H1 (cell line): ENCODE measurements at regions of chr16 and their contacts with region 1.

Region 1: DNA sequence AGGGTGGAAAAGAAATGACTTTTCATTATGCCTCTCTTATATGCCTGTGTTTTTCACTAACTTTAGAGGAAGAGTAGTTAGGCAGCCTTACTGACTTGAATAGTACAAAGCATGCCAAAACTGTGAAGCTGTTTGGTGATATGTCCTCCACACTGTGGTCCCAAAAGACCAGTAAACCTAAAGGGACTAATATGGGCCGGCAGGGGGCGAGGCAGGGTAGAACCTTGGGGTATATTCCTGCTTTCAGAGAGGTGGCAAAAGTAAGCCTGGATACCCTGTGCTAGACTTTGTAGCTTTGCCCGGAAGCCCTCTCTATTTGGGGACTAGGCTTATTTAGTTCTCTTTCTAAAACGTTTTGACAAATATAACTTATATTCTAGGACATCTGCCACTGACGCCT is 36.5 kb upstream of the VWA3A start:
- DNase-seq: peak in 1 of 2 experiments; percentile 69
- H3K4me3 ChIP-seq: no peak overlapping the region
- H3K27ac ChIP-seq: no peak overlapping the region
- H3K4me1 ChIP-seq: no peaks in the 10 kb centered on the region
- H3K27me3 ChIP-seq: no peaks in the 10 kb centered on the region
- CTCF ChIP-seq: peak; percentile 59 to 70 (median 67)
- EP300 ChIP-seq: no peak
- POLR2A ChIP-seq: no peak
- RAD21 ChIP-seq: peak; percentile 45 to 59

Region 2: GRCh38 chr16:22070361-22071330 is 14.8 kb after region 1 on chr16:
- CTCF ChIA-PET with region 1: interaction called, 38 read pairs
- POLR2A ChIA-PET with region 1: interaction called, 5 read pairs
- DNase-seq: no peak
- H3K4me3 ChIP-seq: no peak overlapping the region
- H3K27ac ChIP-seq: no peak overlapping the region
- H3K4me1 ChIP-seq: no peaks in the 10 kb centered on the region
- H3K27me3 ChIP-seq: no peaks in the 10 kb centered on the region
- CTCF ChIP-seq: no peak
- EP300 ChIP-seq: no peak
- POLR2A ChIP-seq: no peak
- RAD21 ChIP-seq: no peak

Region 3: GRCh38 chr16:22091758-22092600 is 36.1 kb after region 1 on chr16 and contains the start of gene VWA3A:
- CTCF ChIA-PET with region 1: interaction called, 10 read pairs
- POLR2A ChIA-PET with region 1: no interaction called
- DNase-seq: peak in 1 of 2 experiments; percentile 64
- H3K4me3 ChIP-seq: no peak within 1 kb of the TSS
- H3K27ac ChIP-seq: peak within 1 kb of the TSS; percentile 60
- H3K4me1 ChIP-seq: peaks cover 0 to 12% (median 3%) of the 10 kb centered on the region in 4 experiments; a peak in 6 of 7 replicates
- H3K27me3 ChIP-seq: no peaks in the 10 kb centered on the region
- CTCF ChIP-seq: no peak
- EP300 ChIP-seq: peak in 1 of 2 experiments; percentile 95; a peak in 2 of 3 replicates
- POLR2A ChIP-seq: no peak
- RAD21 ChIP-seq: no peak
- total RNA-seq, gene VWA3A: not detected in 2 replicates

Region 4: DNA sequence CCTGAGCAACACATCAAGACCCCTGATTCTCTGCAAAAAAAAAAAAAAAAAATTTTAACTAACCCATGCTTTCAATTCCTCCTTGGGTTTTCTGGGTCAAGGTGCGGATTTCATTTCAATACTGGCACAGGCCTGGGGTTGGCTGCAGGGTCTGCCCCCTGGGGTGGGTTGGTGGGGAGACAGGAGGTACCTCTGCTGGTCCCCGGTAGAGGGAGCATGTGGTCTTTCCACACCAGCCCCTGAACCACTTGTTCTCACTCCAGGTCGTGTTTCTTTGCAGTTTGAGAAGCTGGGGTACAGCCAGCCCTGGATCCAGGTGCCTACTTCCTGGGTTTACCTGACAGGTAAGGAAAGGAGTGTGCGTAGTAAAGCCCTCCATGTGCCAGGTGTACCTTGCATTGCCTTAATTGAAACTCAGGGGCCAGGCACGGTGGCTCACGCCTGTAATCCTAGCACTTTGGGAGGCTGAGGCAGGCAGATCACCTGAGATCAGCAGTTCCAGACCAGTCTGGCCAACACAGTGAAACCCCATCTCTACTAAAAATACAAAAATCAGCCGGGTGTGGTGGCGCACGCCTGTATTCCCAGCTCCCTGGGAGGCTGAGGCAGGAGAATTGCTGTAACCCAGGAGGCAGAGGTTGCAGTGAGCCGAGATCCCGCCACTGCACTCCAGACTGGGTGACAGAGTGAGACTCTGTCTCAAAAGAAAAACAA is 128.2 kb after region 1 on chr16:
- CTCF ChIA-PET with region 1: interaction called, 11 read pairs
- POLR2A ChIA-PET with region 1: no interaction called
- DNase-seq: peak in 1 of 2 experiments; percentile 77
- H3K4me3 ChIP-seq: no peak overlapping the region
- H3K27ac ChIP-seq: no peak overlapping the region
- H3K4me1 ChIP-seq: peaks cover 0 to 4% (median 2%) of the 10 kb centered on the region in 4 experiments; a peak in 3 of 7 replicates
- H3K27me3 ChIP-seq: peaks cover 0 to under 1% (median 0%) of the 10 kb centered on the region in 4 experiments; a peak in 2 of 7 replicates
- CTCF ChIP-seq: peak; percentile 54 to 69 (median 66)
- EP300 ChIP-seq: no peak
- POLR2A ChIP-seq: no peak
- RAD21 ChIP-seq: peak; percentile 28 to 44; a peak in 2 of 4 replicates

Region 5: GRCh38 chr16:22321339-22322001 is 265.6 kb after region 1 on chr16:
- CTCF ChIA-PET with region 1: no interaction called
- POLR2A ChIA-PET with region 1: no interaction called
- DNase-seq: peak in 1 of 2 experiments; percentile 80
- H3K4me3 ChIP-seq: no peak overlapping the region
- H3K27ac ChIP-seq: peak overlapping the region; percentile 62
- H3K4me1 ChIP-seq: peaks cover 0 to 3% (median under 1%) of the 10 kb centered on the region in 4 experiments; a peak in 2 of 7 replicates
- H3K27me3 ChIP-seq: no peaks in the 10 kb centered on the region
- CTCF ChIP-seq: peak; percentile 86 to 97 (median 91)
- EP300 ChIP-seq: no peak
- POLR2A ChIP-seq: no peak
- RAD21 ChIP-seq: peak; percentile 90 to 95